ENCODE measurements at regions of chr3 and their contacts with region 1.

Region 1: GRCh38 chr3:112293368-112294321 is at the start of gene SLC9C1:
- DNase-seq: peak in 4 of 5 donors; percentile 35 to 56 (median 38)
- H3K4me3 ChIP-seq: no peak within 1 kb of the TSS
- H3K4me3 Mint-ChIP-seq: peak within 1 kb of the TSS; percentile 9 to 76 (median 48)
- H3K27ac ChIP-seq: no peak within 1 kb of the TSS
- H3K27ac Mint-ChIP-seq: peak within 1 kb of the TSS in 1 of 7 donors; percentile 17
- H3K4me1 ChIP-seq: peaks cover 19% of the 10 kb centered on the region
- H3K4me1 Mint-ChIP-seq: peaks cover 15 to 28% (median 25%) of the 10 kb centered on the region in 4 donors
- H3K27me3 ChIP-seq: no peaks in the 10 kb centered on the region
- H3K27me3 Mint-ChIP-seq: peaks cover 0 to 2% of the 10 kb centered on the region in 2 donors
- total RNA-seq, gene SLC9C1: not detected

Region 2: DNA sequence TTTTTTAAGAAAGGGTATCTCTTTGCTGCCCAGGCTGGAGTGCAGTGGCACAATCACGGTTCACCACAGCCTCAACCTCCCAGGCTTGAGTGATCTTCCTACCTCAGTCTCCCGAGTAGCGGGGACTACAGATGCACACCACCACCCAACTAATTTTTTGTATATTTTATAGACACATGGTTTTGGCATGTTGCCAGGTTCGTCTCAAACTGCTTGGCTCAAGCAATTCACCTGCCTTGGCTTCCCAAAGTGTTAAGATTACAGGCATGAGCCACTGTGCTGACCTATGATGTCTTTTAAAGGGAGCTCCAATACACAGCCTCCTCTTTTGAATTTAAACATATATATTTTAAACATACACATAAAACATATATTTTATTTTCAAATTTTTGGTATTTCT is 60.6 kb before region 1 on chr3:
- CTCF ChIA-PET with region 1: no interaction called
- POLR2A ChIA-PET with region 1: no interaction called
- intact Hi-C with region 1: no loop called
- DNase-seq: no peak
- H3K4me3 ChIP-seq: no peak overlapping the region
- H3K4me3 Mint-ChIP-seq: no peak overlapping the region
- H3K27ac ChIP-seq: no peak overlapping the region
- H3K27ac Mint-ChIP-seq: no peak overlapping the region
- H3K4me1 ChIP-seq: no peaks in the 10 kb centered on the region
- H3K4me1 Mint-ChIP-seq: peaks cover 0 to 4% (median 0%) of the 10 kb centered on the region in 4 donors
- H3K27me3 ChIP-seq: no peaks in the 10 kb centered on the region
- H3K27me3 Mint-ChIP-seq: peaks cover 0 to 3% of the 10 kb centered on the region in 2 donors

Region 3: GRCh38 chr3:112303764-112304325 is 10.2 kb after region 1 on chr3:
- CTCF ChIA-PET with region 1: interaction called, 28 read pairs
- POLR2A ChIA-PET with region 1: interaction called, 4 read pairs
- intact Hi-C with region 1: no loop called
- DNase-seq: peak in 3 of 5 donors; percentile 13 to 30 (median 21)
- H3K4me3 ChIP-seq: peak overlapping the region; percentile 51 to 70
- H3K4me3 Mint-ChIP-seq: no peak overlapping the region
- H3K27ac ChIP-seq: no peak overlapping the region
- H3K27ac Mint-ChIP-seq: no peak overlapping the region
- H3K4me1 ChIP-seq: peaks cover 17% of the 10 kb centered on the region
- H3K4me1 Mint-ChIP-seq: peaks cover 0 to 1% (median under 1%) of the 10 kb centered on the region in 4 donors
- H3K27me3 ChIP-seq: no peaks in the 10 kb centered on the region
- H3K27me3 Mint-ChIP-seq: no peaks in the 10 kb centered on the region

Region 4: GRCh38 chr3:112321867-112322649 is 28.4 kb after region 1 on chr3:
- CTCF ChIA-PET with region 1: interaction called, 13 read pairs
- POLR2A ChIA-PET with region 1: interaction called, 3 read pairs
- intact Hi-C with region 1: no loop called
- DNase-seq: no peak
- H3K4me3 ChIP-seq: no peak overlapping the region
- H3K4me3 Mint-ChIP-seq: no peak overlapping the region
- H3K27ac ChIP-seq: no peak overlapping the region
- H3K27ac Mint-ChIP-seq: no peak overlapping the region
- H3K4me1 ChIP-seq: no peaks in the 10 kb centered on the region
- H3K4me1 Mint-ChIP-seq: peaks cover 0 to 3% (median under 1%) of the 10 kb centered on the region in 4 donors
- H3K27me3 ChIP-seq: no peaks in the 10 kb centered on the region
- H3K27me3 Mint-ChIP-seq: peaks cover 6% of the 10 kb centered on the region in 2 donors

Region 5: DNA sequence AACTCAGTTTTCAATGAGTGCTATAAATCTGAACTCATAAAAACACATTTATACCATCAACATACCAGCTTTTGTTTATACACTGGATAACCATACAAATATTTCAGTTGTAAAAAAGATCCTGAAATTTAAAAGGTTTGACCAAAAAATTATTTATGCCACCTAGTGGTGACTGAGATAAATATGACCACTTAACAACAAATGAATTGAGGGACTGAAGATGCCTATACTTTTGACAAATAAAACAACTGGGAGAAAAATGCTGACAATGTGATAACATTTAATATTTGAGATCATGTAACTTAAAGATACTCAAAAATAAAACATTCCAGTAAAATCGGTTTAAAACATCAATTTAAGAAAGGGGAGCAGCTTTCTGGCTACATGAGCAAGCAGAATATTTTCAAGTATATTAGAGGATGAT is 237.7 kb after region 1 on chr3:
- CTCF ChIA-PET with region 1: interaction called, 10 read pairs
- POLR2A ChIA-PET with region 1: no interaction called
- intact Hi-C with region 1: loop called (anchors 1 kb)
- DNase-seq: peak in 4 of 5 donors; percentile 22 to 37 (median 30)
- H3K4me3 ChIP-seq: no peak overlapping the region
- H3K4me3 Mint-ChIP-seq: no peak overlapping the region
- H3K27ac ChIP-seq: no peak overlapping the region
- H3K27ac Mint-ChIP-seq: peak overlapping the region in 2 of 7 donors; percentile 5 to 12
- H3K4me1 ChIP-seq: no peaks in the 10 kb centered on the region
- H3K4me1 Mint-ChIP-seq: peaks cover 0 to 4% (median 2%) of the 10 kb centered on the region in 4 donors
- H3K27me3 ChIP-seq: no peaks in the 10 kb centered on the region
- H3K27me3 Mint-ChIP-seq: no peaks in the 10 kb centered on the region

Region 6: GRCh38 chr3:112568642-112569041 is 275.0 kb after region 1 on chr3:
- CTCF ChIA-PET with region 1: no interaction called
- POLR2A ChIA-PET with region 1: no interaction called
- intact Hi-C with region 1: no loop called
- DNase-seq: no peak
- H3K4me3 ChIP-seq: no peak overlapping the region
- H3K4me3 Mint-ChIP-seq: no peak overlapping the region
- H3K27ac ChIP-seq: no peak overlapping the region
- H3K27ac Mint-ChIP-seq: peak overlapping the region in 1 of 7 donors; percentile 22
- H3K4me1 ChIP-seq: peaks cover 1% of the 10 kb centered on the region
- H3K4me1 Mint-ChIP-seq: peaks cover 6 to 29% (median 16%) of the 10 kb centered on the region in 4 donors
- H3K27me3 ChIP-seq: no peaks in the 10 kb centered on the region
- H3K27me3 Mint-ChIP-seq: no peaks in the 10 kb centered on the region

Measured in CD4-positive, alpha-beta memory T cell (primary cell).